ENCODE measurements at regions of chr1 and their contacts with region 1.

Region 1: DNA sequence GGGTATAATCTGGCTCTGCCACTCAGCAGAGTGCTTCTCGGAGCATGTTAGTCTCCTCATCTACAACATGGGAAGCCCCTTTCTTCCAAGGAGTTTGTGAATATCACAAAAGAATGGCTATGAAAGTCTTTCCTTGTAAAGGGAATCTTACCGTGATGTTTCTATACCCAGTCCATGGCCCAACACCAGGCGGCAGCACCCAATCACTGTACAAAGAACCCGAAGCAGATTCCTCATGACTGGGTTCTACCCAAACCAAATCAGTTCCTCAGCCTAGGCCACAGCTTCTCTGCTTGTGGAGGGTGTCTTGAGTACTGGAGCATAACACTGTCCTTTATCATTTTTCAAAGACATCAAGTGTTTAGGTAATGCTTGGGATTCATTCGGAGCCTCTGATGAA is 16.6 kb upstream of the SLFNL1 start:
- DNase-seq: no peak
- ATAC-seq: 0 out of 3 replicates have a peak, but pooled peaks have one; percentile 15
- H3K4me3 ChIP-seq: no peak overlapping the region
- H3K27ac ChIP-seq: no peak overlapping the region
- H3K4me1 ChIP-seq: peaks cover 2 to 3% of the 10 kb centered on the region in 2 experiments; a peak in 2 of 5 replicates
- H3K27me3 ChIP-seq: no peaks in the 10 kb centered on the region
- CTCF ChIP-seq: peak in 2 of 3 experiments; percentile 44 to 50; a peak in 4 of 6 replicates
- EP300 ChIP-seq: no peak
- POLR2A ChIP-seq: no peak
- RAD21 ChIP-seq: peak in 1 of 2 experiments; percentile 65; a peak in 3 of 4 replicates

Region 2: DNA sequence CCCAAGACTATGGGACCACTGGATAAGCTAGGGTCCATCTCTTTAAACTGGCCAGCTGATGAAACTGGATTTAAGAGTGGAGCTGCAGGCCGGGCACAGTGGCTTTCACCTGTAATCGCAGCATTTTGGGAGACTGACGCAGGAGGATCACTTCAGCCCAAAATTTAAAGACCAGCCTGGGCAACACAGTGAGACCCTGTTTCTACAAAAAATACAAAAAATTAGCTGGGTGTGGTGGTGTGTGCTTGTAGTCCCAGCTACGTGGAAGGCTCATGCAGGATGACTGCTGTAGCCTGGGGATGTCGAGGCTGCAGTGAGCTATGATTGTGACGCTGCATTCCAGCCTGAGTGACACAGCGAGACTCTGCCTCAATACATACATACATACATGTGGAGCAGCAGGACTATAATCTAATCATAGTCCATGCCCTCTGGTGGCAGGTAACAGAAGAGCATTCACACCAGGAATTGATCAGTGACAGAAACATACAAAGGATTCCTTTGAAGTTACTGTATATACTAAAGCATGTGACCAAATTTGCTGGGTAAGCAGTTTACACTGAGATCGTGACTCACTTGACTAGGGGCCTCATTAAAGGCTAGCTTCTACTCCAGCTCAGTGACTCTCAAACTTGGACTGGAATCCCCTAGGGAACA is 84.9 kb after region 1 on chr1:
- CTCF ChIA-PET with region 1: no interaction called
- POLR2A ChIA-PET with region 1: no interaction called
- in situ Hi-C with region 1: no loop called
- intact Hi-C with region 1: loop called (anchors 5 kb)
- DNase-seq: peak; percentile 23 to 45 (median 40)
- ATAC-seq: peak; percentile 91
- H3K4me3 ChIP-seq: no peak overlapping the region
- H3K27ac ChIP-seq: no peak overlapping the region
- H3K4me1 ChIP-seq: no peaks in the 10 kb centered on the region; a peak in 1 of 5 replicates
- H3K27me3 ChIP-seq: no peaks in the 10 kb centered on the region
- CTCF ChIP-seq: peak; percentile 27 to 72 (median 65); a peak in 5 of 6 replicates
- EP300 ChIP-seq: no peak
- POLR2A ChIP-seq: no peak
- RAD21 ChIP-seq: peak in 1 of 2 experiments; percentile 69; a peak in 2 of 4 replicates

Region 3: DNA sequence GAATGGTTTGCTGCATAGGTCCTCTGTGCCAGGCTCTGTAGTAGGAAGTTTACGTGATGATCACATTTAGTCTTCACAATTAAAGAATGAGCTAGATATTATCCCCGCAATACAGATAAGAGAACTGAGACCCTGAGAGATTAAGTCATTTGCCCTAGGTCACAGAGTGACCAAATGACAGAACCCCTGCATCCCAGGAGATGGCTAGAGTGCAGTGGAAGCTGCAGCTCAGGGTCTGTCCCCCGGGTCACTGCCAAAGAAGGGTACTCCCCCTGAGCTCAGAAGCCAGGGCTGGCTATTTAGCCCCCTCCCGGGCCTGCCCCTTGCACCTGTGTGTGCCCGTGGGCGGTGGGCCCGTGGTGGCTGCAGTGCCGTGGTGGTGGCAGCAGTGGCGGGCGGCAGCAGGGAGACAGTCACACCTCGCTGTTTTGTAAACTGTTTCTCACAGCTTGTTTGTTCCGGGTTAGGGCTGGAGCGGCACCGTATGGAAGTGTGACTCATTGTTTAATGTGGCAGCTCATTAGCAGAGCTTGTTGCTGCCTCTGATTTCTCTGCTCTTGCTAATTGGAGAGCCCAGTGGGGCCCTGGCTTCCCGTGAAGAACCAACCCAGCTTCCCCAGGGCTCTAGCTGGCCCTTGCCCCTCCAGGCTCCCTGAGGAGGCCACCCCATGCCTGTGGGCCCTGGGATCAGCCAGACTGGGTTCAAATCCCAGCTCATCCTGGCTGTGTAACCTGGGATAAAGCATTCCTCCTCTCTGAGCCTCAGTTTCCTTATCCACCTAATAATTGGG is 303.9 kb after region 1 on chr1:
- CTCF ChIA-PET with region 1: no interaction called
- POLR2A ChIA-PET with region 1: no interaction called
- in situ Hi-C with region 1: no loop called
- intact Hi-C with region 1: no loop called
- DNase-seq: no peak
- ATAC-seq: peak; percentile 76
- H3K4me3 ChIP-seq: no peak overlapping the region
- H3K27ac ChIP-seq: no peak overlapping the region
- H3K4me1 ChIP-seq: peaks cover 0 to 4% of the 10 kb centered on the region in 2 experiments; a peak in 3 of 5 replicates
- H3K27me3 ChIP-seq: peaks cover 0 to 3% of the 10 kb centered on the region in 2 experiments; a peak in 1 of 5 replicates
- CTCF ChIP-seq: no peak
- EP300 ChIP-seq: no peak
- POLR2A ChIP-seq: no peak
- RAD21 ChIP-seq: no peak

Region 4: DNA sequence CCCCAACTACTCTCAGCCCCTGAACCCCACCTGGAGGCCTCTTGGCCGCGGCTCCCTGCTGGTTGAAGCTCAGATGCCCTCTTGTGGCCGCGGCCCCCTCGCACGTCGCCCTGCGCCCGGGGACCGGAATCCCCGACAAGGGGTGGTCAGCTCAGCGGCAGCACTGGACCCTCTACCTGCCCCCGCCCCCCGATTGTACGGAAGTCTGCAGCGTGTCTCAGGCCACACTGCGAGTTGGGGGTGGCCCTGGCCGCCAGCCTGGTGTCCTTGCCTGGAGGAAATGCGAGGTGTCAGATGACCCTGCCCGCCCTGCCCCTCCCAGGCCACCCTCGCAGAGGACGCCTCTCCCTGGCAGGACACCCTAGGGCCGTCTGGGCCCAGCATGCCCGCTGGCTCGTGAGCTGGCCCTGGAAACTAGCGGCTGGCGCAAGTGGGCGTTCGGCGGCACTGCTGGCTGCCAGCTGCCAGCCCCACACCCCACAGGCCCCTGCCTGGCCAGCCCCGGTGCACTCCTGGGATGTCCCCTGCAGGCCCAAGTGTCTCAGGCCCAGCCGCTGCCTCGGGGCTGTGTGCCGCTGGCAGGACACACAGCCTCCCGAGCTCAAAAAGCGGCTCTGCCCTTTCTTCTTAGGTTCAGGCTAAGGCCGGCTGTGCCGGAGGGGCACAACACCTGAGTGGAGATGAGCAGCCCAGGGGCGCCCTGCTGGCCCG is 385.6 kb after region 1 on chr1:
- CTCF ChIA-PET with region 1: no interaction called
- POLR2A ChIA-PET with region 1: no interaction called
- in situ Hi-C with region 1: no loop called
- intact Hi-C with region 1: loop called (anchors 10 kb)
- DNase-seq: peak; percentile 34 to 53 (median 44)
- ATAC-seq: peak; percentile 82
- H3K4me3 ChIP-seq: no peak overlapping the region
- H3K27ac ChIP-seq: no peak overlapping the region
- H3K4me1 ChIP-seq: peaks cover 0 to 15% of the 10 kb centered on the region in 2 experiments; a peak in 1 of 5 replicates
- H3K27me3 ChIP-seq: peaks cover 15 to 50% of the 10 kb centered on the region in 2 experiments
- CTCF ChIP-seq: peak; percentile 63 to 91 (median 65)
- EP300 ChIP-seq: no peak
- POLR2A ChIP-seq: no peak
- RAD21 ChIP-seq: peak; percentile 23 to 67